Activated CD4-positive, alpha-beta T cell treated with anti-CD3 and anti-CD28 coated beads for 36 hours (primary cell): ENCODE measurements at regions of chr1 and their contacts with region 1.

Region 1: DNA sequence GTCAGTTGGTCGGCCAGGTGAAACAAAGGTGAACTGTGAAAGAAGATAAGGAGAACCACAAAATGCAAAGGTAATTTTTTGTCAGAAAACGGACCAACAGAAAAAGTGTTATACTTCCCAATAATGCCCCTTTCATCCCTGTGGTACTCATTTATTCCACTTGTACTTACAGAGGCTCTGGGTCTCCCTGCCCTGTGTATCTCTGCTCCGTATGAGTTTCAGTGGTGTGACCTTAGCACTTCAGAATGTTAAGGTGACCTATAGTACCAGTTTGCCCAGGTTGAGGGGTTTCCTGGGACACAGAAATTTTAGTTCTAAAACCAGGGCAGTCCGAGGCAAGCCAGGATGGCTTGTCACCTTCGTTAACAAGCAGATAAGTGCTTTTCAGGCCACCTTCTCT is 254.8 kb downstream of the OLFM3 start:
- DNase-seq: no peak
- ATAC-seq: no peak
- H3K4me3 Mint-ChIP-seq: no peak overlapping the region
- H3K27ac Mint-ChIP-seq: no peak overlapping the region
- H3K4me1 Mint-ChIP-seq: no peaks in the 10 kb centered on the region
- H3K27me3 Mint-ChIP-seq: no peaks in the 10 kb centered on the region

Region 2: GRCh38 chr1:101357444-101357986 is 384.4 kb before region 1 on chr1:
- CTCF ChIA-PET with region 1: no interaction called
- POLR2A ChIA-PET with region 1: no interaction called
- intact Hi-C with region 1: no loop called
- DNase-seq: peak; percentile 76
- ATAC-seq: peak; percentile 100
- H3K4me3 Mint-ChIP-seq: no peak overlapping the region
- H3K27ac Mint-ChIP-seq: no peak overlapping the region
- H3K4me1 Mint-ChIP-seq: peaks cover 8% of the 10 kb centered on the region
- H3K27me3 Mint-ChIP-seq: no peaks in the 10 kb centered on the region

Region 3: DNA sequence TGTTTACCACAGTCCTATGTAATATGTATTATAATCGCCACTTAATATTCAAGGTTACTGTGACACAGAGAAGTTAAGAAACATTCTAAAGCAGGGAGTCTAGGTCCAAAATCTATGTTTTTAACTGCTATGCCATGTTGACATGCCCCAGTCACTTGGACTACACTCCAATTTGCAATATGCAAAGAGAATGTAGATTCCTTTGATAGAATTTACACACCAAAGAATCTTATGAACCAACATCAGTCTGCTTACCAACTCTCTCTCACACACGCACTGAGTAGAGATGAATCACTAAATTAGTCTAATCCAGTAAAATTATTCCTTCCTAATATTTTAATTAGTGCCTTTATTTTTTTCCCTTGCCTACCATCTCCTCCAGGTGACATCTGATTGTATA is 11.4 kb before region 1 on chr1:
- CTCF ChIA-PET with region 1: interaction called, 3 read pairs
- POLR2A ChIA-PET with region 1: no interaction called
- intact Hi-C with region 1: loop called in 1 of 2 experiments (anchors 1 kb)
- DNase-seq: no peak
- ATAC-seq: no peak
- H3K4me3 Mint-ChIP-seq: no peak overlapping the region
- H3K27ac Mint-ChIP-seq: no peak overlapping the region
- H3K4me1 Mint-ChIP-seq: no peaks in the 10 kb centered on the region
- H3K27me3 Mint-ChIP-seq: peaks cover 2% of the 10 kb centered on the region

Region 4: DNA sequence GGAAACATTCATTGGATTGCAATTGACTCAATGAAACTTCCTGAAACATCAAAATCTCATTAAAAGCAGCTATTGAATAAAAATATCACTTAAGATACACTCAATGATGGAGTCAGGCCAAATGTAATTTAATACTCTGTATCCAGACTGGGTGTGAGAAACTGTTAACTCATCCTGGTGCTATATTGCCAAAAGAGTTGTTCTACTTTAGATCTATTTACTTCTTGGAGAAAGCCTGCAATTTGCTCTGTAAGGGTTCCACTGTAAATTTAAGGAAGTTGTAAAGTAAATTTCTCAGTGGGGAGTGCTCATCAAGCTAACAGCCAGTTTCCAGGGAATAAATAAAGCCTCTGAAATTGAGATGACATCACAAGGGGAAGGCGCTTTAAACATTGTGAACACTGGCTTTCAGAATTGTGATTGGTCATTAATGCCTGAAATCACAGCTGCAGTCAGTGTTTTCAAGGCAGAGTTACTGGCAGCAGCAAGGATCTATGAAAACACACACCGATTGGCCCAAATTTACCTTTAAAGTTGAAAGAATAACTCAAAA is 163.4 kb after region 1 on chr1:
- CTCF ChIA-PET with region 1: no interaction called
- POLR2A ChIA-PET with region 1: no interaction called
- intact Hi-C with region 1: no loop called
- DNase-seq: no peak
- ATAC-seq: no peak
- H3K4me3 Mint-ChIP-seq: no peak overlapping the region
- H3K27ac Mint-ChIP-seq: no peak overlapping the region
- H3K4me1 Mint-ChIP-seq: no peaks in the 10 kb centered on the region
- H3K27me3 Mint-ChIP-seq: no peaks in the 10 kb centered on the region